H1 (cell line): ENCODE measurements at regions of chr15 and their contacts with region 1.

Region 1: DNA sequence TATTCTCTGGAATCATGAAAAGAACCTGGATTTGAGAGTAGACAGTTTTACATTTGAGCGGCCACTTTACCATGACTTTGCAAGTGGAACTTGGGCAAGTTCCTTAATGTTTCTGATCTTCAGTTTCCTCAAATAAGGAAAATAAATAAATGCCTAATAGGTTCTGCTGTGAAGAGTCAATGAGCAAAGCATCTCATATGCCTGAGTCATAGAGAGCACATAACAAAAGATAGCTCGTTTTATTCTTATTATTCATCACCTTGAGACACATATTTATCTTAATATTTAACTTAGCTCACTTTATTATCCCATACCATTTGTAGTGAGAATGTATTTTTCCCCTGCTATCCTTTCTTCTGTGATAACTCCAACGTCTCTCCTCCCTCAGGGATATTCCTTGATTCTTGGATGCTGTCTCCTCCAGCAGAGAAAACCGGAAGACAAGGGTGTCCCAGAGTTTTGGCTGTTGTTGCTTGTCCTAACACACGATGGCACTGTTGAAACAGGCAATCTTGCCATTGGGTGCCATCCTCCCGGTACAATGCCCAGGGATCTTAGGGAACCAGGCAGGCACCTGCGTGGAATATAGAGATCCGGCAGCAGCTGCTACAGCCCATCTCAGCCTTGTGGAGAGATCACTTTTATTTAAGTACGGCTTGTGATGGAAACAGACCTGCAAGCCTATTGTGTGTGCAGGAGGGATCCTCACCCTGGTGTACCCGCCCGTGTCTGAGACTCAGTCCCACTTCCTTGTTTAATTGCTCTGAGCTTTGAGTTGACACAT is 33.3 kb upstream of the VPS33B start:
- DNase-seq: peak; percentile 49 to 72
- H3K4me3 ChIP-seq: no peak overlapping the region
- H3K27ac ChIP-seq: no peak overlapping the region
- H3K4me1 ChIP-seq: no peaks in the 10 kb centered on the region
- H3K27me3 ChIP-seq: no peaks in the 10 kb centered on the region
- CTCF ChIP-seq: peak; percentile 77 to 96 (median 89)
- EP300 ChIP-seq: no peak
- POLR2A ChIP-seq: no peak
- RAD21 ChIP-seq: peak; percentile 98 to 99

Region 2: GRCh38 chr15:91040856-91041255 is 14.9 kb before region 1 on chr15:
- CTCF ChIA-PET with region 1: interaction called, 11 read pairs
- POLR2A ChIA-PET with region 1: no interaction called
- DNase-seq: no peak
- H3K4me3 ChIP-seq: no peak overlapping the region
- H3K27ac ChIP-seq: no peak overlapping the region
- H3K4me1 ChIP-seq: no peaks in the 10 kb centered on the region
- H3K27me3 ChIP-seq: no peaks in the 10 kb centered on the region; a peak in 2 of 7 replicates
- CTCF ChIP-seq: no peak
- EP300 ChIP-seq: no peak
- POLR2A ChIP-seq: no peak
- RAD21 ChIP-seq: no peak

Region 3: GRCh38 chr15:91075739-91076138 is 20.0 kb after region 1 on chr15:
- CTCF ChIA-PET with region 1: interaction called, 47 read pairs
- POLR2A ChIA-PET with region 1: no interaction called
- DNase-seq: no peak
- H3K4me3 ChIP-seq: no peak overlapping the region
- H3K27ac ChIP-seq: no peak overlapping the region
- H3K4me1 ChIP-seq: no peaks in the 10 kb centered on the region
- H3K27me3 ChIP-seq: no peaks in the 10 kb centered on the region
- CTCF ChIP-seq: no peak
- EP300 ChIP-seq: no peak
- POLR2A ChIP-seq: no peak
- RAD21 ChIP-seq: no peak

Region 4: GRCh38 chr15:91214675-91215590 is 159.2 kb after region 1 on chr15:
- CTCF ChIA-PET with region 1: interaction called, 17 read pairs
- POLR2A ChIA-PET with region 1: no interaction called
- DNase-seq: no peak
- H3K4me3 ChIP-seq: no peak overlapping the region
- H3K27ac ChIP-seq: no peak overlapping the region
- H3K4me1 ChIP-seq: peaks cover 0 to 5% (median 2%) of the 10 kb centered on the region in 4 experiments; a peak in 2 of 7 replicates
- H3K27me3 ChIP-seq: no peaks in the 10 kb centered on the region
- CTCF ChIP-seq: no peak
- EP300 ChIP-seq: no peak
- POLR2A ChIP-seq: no peak
- RAD21 ChIP-seq: no peak

Region 5: GRCh38 chr15:91238644-91239425 is 183.1 kb after region 1 on chr15:
- CTCF ChIA-PET with region 1: interaction called, 43 read pairs
- POLR2A ChIA-PET with region 1: no interaction called
- DNase-seq: no peak
- H3K4me3 ChIP-seq: no peak overlapping the region
- H3K27ac ChIP-seq: no peak overlapping the region
- H3K4me1 ChIP-seq: no peaks in the 10 kb centered on the region
- H3K27me3 ChIP-seq: no peaks in the 10 kb centered on the region
- CTCF ChIP-seq: no peak
- EP300 ChIP-seq: no peak
- POLR2A ChIP-seq: no peak
- RAD21 ChIP-seq: no peak

Region 6: DNA sequence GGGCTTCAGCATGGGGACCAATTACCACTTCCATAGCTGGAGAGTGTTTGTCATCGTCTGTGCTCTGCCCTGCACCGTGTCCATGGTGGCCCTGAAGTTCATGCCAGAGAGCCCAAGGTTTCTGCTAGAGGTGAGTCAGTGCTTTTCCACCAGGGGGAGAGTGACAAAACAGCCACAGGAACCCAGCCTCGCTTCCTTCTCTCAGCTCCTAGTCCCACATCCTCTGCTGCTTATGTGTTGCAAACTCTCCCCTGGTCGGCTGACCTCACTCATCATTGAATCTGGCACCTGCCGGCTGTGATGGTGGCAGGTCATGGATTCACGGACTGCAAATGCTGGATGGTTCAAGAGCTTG is 202.7 kb after region 1 on chr15:
- CTCF ChIA-PET with region 1: interaction called, 18 read pairs
- POLR2A ChIA-PET with region 1: no interaction called
- DNase-seq: no peak
- H3K4me3 ChIP-seq: no peak overlapping the region
- H3K27ac ChIP-seq: no peak overlapping the region
- H3K4me1 ChIP-seq: no peaks in the 10 kb centered on the region
- H3K27me3 ChIP-seq: peaks cover 0 to 3% (median 0%) of the 10 kb centered on the region in 4 experiments; a peak in 1 of 7 replicates
- CTCF ChIP-seq: peak; percentile 33 to 49 (median 33)
- EP300 ChIP-seq: no peak
- POLR2A ChIP-seq: no peak
- RAD21 ChIP-seq: peak in 1 of 2 experiments; percentile 36; a peak in 1 of 4 replicates